ENCODE measurements at regions of chr21 and their contacts with region 1.

Region 1: DNA sequence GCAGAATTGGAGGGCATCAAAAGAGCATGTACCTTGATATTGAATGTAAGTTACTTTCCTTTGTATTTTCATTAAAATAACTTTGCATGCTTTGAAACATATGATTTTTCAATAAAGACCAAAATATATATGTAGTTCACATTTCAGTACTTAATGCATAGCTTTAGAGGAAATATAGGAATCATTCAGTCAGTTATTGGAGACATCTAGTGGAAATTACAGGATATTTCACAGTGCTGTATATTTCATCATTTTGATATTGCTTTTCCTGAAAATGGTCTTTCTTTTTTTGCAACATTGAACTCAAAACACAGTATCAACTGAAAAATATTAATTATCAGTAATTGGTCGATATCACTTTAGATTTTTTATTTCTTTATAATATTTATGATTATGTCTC is 375.8 kb downstream of the NCAM2 start:
- DNase-seq: no peak
- H3K4me3 ChIP-seq: no peak overlapping the region
- H3K4me1 ChIP-seq: no peaks in the 10 kb centered on the region
- H3K27me3 ChIP-seq: no peaks in the 10 kb centered on the region

Region 2: DNA sequence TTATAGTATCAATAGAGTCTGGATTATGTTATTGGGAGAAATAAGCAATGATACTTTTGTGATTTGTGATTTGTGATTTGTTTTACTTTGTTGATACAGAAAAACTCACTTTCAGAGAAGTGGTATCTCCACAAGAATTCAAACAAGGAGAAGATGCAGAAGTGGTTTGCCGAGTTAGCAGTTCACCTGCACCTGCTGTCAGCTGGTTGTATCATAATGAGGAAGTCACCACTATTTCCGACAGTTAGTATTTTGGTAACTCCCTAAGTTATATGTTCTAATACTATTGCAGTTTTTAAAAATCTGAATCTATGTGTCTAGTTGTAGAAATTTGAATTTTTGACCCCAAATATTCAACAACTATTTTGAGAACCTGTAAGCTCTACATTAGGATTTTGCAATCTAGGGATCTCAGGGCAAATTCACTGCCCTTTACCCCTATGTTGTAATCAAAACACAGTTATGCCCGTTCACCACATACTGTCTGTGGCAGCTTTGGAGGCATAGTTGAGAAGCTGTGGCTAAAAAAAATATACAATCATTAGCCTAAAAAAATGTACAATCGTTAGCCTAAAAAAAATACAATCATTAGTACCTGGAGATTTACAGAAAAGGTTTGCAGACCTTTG is 87.7 kb before region 1 on chr21:
- in situ Hi-C with region 1: no loop called
- DNase-seq: no peak
- H3K4me3 ChIP-seq: no peak overlapping the region
- H3K4me1 ChIP-seq: no peaks in the 10 kb centered on the region
- H3K27me3 ChIP-seq: no peaks in the 10 kb centered on the region

Region 3: GRCh38 chr21:21463456-21463855 is 89.5 kb after region 1 on chr21:
- in situ Hi-C with region 1: loop called (anchors 25 kb)
- DNase-seq: no peak
- H3K4me3 ChIP-seq: no peak overlapping the region
- H3K4me1 ChIP-seq: no peaks in the 10 kb centered on the region
- H3K27me3 ChIP-seq: no peaks in the 10 kb centered on the region